ENCODE measurements at regions of chr1 and their contacts with region 1.

Region 1: GRCh38 chr1:27603681-27604578 is at the start of gene AHDC1:
- DNase-seq: peak; percentile 95
- total RNA-seq, gene AHDC1: 57.7 TPM

Region 2: DNA sequence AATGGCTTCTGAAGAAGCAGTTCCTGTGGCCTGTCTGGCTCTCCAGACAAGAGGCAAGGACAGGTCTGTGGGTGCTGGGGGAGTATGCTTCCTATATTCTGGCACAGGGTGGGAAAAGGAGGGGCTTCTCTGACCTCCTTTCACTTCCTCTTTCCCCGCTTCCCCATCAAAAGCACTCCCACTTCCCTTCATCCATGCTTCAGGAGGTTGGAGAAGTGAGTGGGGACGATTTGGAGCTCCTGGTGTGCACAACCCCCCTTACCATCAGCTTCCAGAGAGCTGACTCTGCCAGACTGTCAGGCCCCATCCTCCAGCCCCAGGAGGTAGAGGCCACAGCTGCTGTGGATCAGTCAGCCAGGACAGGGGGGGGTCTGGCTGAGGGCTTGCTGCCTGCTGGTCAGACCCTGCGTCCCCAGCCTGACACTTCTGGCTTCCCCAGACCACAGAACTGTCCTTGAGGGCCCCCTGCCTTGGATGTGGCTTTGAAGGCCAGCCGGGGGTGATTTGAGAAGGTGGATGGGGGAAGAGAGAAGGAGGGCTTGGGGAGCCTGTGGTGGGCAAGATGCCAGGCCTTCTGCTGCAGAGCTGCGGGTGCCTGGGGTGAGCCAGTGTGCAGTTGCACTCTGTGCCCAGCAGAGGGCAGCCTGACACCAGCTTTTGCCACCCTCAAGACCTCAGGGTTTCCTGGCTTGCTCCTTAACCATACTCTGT is 303.4 kb before region 1 on chr1:
- intact Hi-C with region 1: loop called (anchors 2 kb)
- DNase-seq: peak; percentile 92

Region 3: GRCh38 chr1:27416387-27417111 is 187.4 kb before region 1 on chr1:
- intact Hi-C with region 1: loop called (anchors 2 kb)
- DNase-seq: no peak

Region 4: GRCh38 chr1:27427329-27427728 is 176.6 kb before region 1 on chr1:
- intact Hi-C with region 1: no loop called
- DNase-seq: no peak

Region 5: GRCh38 chr1:27525296-27526272 is 78.3 kb before region 1 on chr1:
- intact Hi-C with region 1: loop called (anchors 2 kb)
- DNase-seq: peak; percentile 92

Region 6: GRCh38 chr1:27563591-27564471 is 40.1 kb before region 1 on chr1:
- intact Hi-C with region 1: loop called (anchors 2 kb)
- DNase-seq: peak; percentile 88

Region 7: GRCh38 chr1:27725374-27726173 is 121.6 kb after region 1 on chr1 and contains the start of gene FAM76A:
- intact Hi-C with region 1: no loop called
- DNase-seq: peak; percentile 100
- total RNA-seq, gene FAM76A: 11.5 TPM

Measured in cardiac septum (tissue), 1 donor.